ENCODE measurements at regions of chr2 and their contacts with region 1.

Region 1: DNA sequence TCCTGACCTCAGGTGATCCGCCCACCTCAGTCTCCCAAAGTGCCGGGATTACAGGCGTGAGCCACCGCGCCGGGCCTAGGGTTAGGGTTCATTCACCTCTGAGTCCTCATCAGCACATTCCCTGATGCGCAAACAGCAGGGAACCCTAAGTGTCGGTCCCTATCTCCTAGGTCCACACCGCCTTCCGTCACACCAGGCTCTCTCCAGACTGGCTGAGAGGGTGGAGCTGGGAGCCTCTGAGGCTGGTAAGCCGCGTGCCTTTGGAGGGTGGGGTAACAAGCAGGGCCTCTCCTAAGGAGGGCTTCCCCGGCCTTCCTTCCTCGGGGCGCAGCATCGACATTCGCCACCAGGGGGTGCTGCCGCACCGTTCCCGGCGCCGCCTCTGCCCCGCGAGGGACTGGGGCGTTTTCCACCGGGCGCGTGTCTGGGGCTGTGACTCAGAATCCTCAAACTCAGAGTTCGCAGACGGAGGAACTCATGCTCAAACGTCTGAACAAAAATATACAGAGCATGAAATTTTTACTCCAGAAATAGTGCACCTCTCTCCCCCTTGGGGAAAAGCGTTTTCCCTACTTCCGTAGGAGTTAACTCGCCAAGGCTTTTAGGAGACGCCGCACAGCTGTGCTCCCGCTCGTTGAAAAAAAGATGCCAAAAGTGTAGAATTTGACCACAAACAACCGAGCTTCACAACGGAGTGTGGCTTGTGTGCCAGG is 63.9 kb upstream of the ASAP2 start:
- DNase-seq: peak; percentile 84
- H3K4me3 Mint-ChIP-seq: peak overlapping the region; percentile 44
- H3K27ac Mint-ChIP-seq: peak overlapping the region; percentile 23
- H3K4me1 Mint-ChIP-seq: peaks cover 20% of the 10 kb centered on the region
- H3K27me3 Mint-ChIP-seq: no peaks in the 10 kb centered on the region
- CTCF ChIP-seq: peak; percentile 96

Region 2: GRCh38 chr2:8882094-8882493 is 260.6 kb before region 1 on chr2:
- CTCF ChIA-PET with region 1: interaction called, 13 read pairs
- POLR2A ChIA-PET with region 1: no interaction called
- intact Hi-C with region 1: no loop called
- DNase-seq: peak; percentile 60
- H3K4me3 Mint-ChIP-seq: no peak overlapping the region
- H3K27ac Mint-ChIP-seq: no peak overlapping the region
- H3K4me1 Mint-ChIP-seq: no peaks in the 10 kb centered on the region
- H3K27me3 Mint-ChIP-seq: no peaks in the 10 kb centered on the region
- CTCF ChIP-seq: peak; percentile 29

Region 3: GRCh38 chr2:9205963-9206948 is 63.5 kb after region 1 on chr2 and contains the start of gene ASAP2:
- CTCF ChIA-PET with region 1: interaction called, 25 read pairs
- POLR2A ChIA-PET with region 1: interaction called, 9 read pairs
- intact Hi-C with region 1: loop called (anchors 1 kb)
- DNase-seq: peak; percentile 67
- H3K4me3 Mint-ChIP-seq: peak within 1 kb of the TSS; percentile 81
- H3K27ac Mint-ChIP-seq: peak within 1 kb of the TSS; percentile 69
- H3K4me1 Mint-ChIP-seq: peaks cover 10% of the 10 kb centered on the region
- H3K27me3 Mint-ChIP-seq: no peaks in the 10 kb centered on the region
- CTCF ChIP-seq: peak; percentile 88
- total RNA-seq, gene ASAP2: 80.8 and 89.5 TPM in 2 replicates

Region 4: DNA sequence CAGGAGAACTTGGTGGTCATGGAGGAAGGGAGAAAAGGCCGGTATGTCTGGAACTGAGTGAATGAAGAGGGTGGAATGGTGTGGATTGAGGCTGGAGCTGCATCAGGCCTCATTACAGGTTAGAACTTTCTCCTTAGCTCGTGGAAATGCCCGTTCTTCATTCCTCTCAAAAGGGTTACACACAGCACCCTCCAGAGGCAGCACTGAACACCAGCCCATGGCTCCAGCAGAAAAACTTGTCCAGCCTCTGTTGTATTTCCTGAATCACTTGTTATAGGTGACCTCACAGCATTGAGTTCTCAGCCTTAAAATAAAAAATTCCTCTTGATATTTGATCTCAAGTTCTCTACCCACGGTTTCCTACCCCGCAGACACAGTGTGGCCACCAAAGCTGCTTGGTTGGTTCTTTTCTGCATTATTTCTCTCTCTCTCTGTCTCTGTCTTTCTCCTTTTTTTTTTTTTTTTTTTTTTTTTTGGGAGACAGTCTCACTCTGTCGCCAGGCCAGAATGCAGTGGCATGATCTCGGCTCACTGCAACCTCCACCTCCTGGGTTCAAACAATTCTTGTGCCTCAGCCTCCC is 191.0 kb after region 1 on chr2:
- CTCF ChIA-PET with region 1: interaction called, 90 read pairs
- POLR2A ChIA-PET with region 1: interaction called, 3 read pairs
- intact Hi-C with region 1: loop called (anchors 1 kb)
- DNase-seq: peak; percentile 78
- H3K4me3 Mint-ChIP-seq: no peak overlapping the region
- H3K27ac Mint-ChIP-seq: peak overlapping the region; percentile 87
- H3K4me1 Mint-ChIP-seq: peaks cover 31% of the 10 kb centered on the region
- H3K27me3 Mint-ChIP-seq: no peaks in the 10 kb centered on the region
- CTCF ChIP-seq: peak; percentile 76

Region 5: DNA sequence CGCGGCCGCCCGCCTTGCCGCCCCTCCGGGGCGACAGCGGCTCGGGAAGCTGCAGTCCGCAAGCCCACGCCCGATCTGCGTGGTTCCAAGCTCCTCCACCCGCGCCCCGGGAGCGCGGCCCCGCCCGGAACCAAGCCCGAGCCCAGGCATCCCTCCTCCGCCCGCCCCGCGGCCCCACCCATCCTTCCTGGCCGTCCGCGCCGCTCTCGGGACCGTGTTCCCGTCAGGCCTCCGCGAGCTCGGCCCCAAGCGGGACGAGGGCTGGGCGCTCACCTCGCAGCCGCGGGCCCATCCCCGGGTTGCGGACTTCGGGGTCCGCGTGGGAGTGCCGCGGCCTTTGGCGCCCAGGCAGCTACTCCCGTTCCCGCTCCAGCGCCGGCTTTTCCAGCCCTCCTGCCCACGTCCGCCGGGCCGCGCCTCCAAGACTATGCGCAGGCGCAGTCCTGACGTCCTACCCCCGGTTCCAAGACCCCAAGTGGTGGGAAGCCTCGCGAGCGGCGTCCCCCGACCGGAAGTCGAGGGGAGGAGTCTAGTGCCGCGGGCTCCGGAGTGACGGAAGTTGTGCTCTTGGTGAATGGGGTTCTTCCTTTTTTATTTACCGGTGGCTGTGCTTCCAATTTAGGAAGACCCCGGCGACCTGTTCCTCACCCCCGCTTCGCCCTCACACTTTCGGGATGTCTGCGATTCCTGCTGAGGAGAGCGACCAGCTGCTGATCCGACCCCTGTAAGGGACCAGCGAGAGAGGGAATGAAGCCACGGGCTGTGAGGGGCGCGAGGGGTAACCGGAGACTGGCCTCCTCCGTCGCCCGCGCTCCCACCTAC is 280.6 kb after region 1 on chr2 and contains the starts of genes CPSF3 and ITGB1BP1:
- CTCF ChIA-PET with region 1: interaction called, 15 read pairs
- POLR2A ChIA-PET with region 1: interaction called, 25 read pairs
- intact Hi-C with region 1: loop called (anchors 2 kb)
- DNase-seq: peak; percentile 98
- H3K4me3 Mint-ChIP-seq: no peak within 1 kb of the TSS
- H3K27ac Mint-ChIP-seq: peak within 1 kb of the TSS; percentile 94
- H3K4me1 Mint-ChIP-seq: peaks cover 20% of the 10 kb centered on the region
- H3K27me3 Mint-ChIP-seq: no peaks in the 10 kb centered on the region
- CTCF ChIP-seq: no peak
- total RNA-seq, gene CPSF3: 51.0 and 51.6 TPM in 2 replicates
- total RNA-seq, gene ITGB1BP1: 124 and 125 TPM in 2 replicates

Region 6: GRCh38 chr2:9830690-9831410 is 688.1 kb after region 1 on chr2:
- CTCF ChIA-PET with region 1: no interaction called
- POLR2A ChIA-PET with region 1: no interaction called
- intact Hi-C with region 1: no loop called
- DNase-seq: no peak
- H3K4me3 Mint-ChIP-seq: no peak overlapping the region
- H3K27ac Mint-ChIP-seq: no peak overlapping the region
- H3K4me1 Mint-ChIP-seq: no peaks in the 10 kb centered on the region
- H3K27me3 Mint-ChIP-seq: no peaks in the 10 kb centered on the region
- CTCF ChIP-seq: no peak

Measured in MCF 10A (cell line).